Aorta (tissue), 5 donors: ENCODE measurements at regions of chr2 and their contacts with region 1.

Region 1: DNA sequence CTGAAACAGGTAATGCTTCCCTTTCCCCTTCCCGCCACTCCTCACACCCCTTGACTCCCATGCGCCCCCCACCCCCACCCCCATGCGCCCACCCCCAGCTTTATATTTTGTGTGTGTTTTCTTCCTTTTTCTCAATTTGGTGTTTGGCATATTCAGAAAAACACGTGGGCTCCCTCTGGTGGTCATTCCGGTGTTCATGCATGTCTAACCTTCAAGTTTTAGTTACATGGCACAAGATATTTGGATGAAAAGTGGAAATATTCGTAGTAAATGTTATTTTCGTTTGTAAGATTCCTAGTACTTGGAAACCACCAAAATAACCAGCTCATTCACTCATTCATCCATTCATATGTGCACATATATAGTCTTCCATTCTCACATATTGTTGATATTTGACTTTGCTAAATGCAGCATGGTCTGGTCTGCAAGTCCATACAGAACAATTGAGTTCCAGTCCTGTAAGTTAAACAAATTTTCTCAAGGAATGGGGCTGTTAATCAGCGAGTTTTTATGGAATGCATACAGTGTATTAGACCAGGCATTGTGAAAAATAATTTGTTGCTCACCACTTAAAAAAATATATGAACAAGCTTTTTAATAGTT is 143.6 kb upstream of the MAP3K20 start:
- DNase-seq: peak; percentile 81
- ATAC-seq: peak; percentile 66
- H3K4me3 ChIP-seq: peak overlapping the region in 1 of 2 donors; percentile 53
- H3K27ac ChIP-seq: no peak overlapping the region
- H3K4me1 ChIP-seq: peaks cover 0 to 3% of the 10 kb centered on the region in 2 donors
- H3K27me3 ChIP-seq: no peaks in the 10 kb centered on the region

Region 2: DNA sequence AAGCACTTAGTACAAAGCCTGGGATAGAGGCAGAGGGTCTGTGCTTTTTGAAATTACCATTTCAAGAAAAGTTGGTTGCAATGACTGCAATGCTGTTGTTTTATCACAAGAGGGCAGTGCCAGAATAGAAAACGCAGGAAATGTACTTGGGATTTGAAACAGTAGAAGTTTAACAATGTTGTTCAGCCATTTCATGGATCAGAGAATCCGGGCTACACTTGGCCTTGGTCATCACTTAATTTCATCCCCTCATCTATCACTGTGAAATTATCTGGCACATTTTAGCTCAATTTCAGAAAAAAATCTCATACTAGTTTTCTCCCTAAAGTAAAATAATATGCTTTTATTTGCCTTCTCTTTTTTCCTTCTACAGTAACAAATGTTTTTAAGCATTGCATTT is 125.5 kb before region 1 on chr2:
- intact Hi-C with region 1: loop called (anchors 2 to 5 kb)
- DNase-seq: no peak
- ATAC-seq: peak; percentile 74
- H3K4me3 ChIP-seq: no peak overlapping the region
- H3K27ac ChIP-seq: no peak overlapping the region
- H3K4me1 ChIP-seq: no peaks in the 10 kb centered on the region
- H3K27me3 ChIP-seq: no peaks in the 10 kb centered on the region

Region 3: GRCh38 chr2:172864182-172864581 is 67.8 kb before region 1 on chr2:
- intact Hi-C with region 1: loop called (anchors 2 to 5 kb)
- DNase-seq: peak; percentile 56 to 79
- ATAC-seq: peak; percentile 70
- H3K4me3 ChIP-seq: no peak overlapping the region
- H3K27ac ChIP-seq: no peak overlapping the region
- H3K4me1 ChIP-seq: no peaks in the 10 kb centered on the region
- H3K27me3 ChIP-seq: peaks cover 0 to 1% of the 10 kb centered on the region in 2 donors

Region 4: GRCh38 chr2:172877826-172878225 is 54.2 kb before region 1 on chr2:
- intact Hi-C with region 1: loop called in 1 of 2 experiments (anchors 2 kb)
- DNase-seq: no peak
- ATAC-seq: no peak
- H3K4me3 ChIP-seq: no peak overlapping the region
- H3K27ac ChIP-seq: no peak overlapping the region
- H3K4me1 ChIP-seq: no peaks in the 10 kb centered on the region
- H3K27me3 ChIP-seq: no peaks in the 10 kb centered on the region

Region 5: GRCh38 chr2:173286153-173286809 is 354.3 kb after region 1 on chr2:
- intact Hi-C with region 1: no loop called
- DNase-seq: no peak
- ATAC-seq: no peak
- H3K4me3 ChIP-seq: no peak overlapping the region
- H3K27ac ChIP-seq: no peak overlapping the region
- H3K4me1 ChIP-seq: no peaks in the 10 kb centered on the region
- H3K27me3 ChIP-seq: no peaks in the 10 kb centered on the region